ENCODE measurements at regions of chr3 and their contacts with region 1.

Region 1: GRCh38 chr3:48429317-48429959 is 448 bp downstream of the PLXNB1 start:
- DNase-seq: peak; percentile 91
- H3K4me3 Mint-ChIP-seq: peak overlapping the region; percentile 80
- H3K27ac Mint-ChIP-seq: peak overlapping the region; percentile 89
- H3K4me1 Mint-ChIP-seq: peaks cover 62% of the 10 kb centered on the region
- H3K27me3 Mint-ChIP-seq: no peaks in the 10 kb centered on the region
- CTCF ChIP-seq: no peak

Region 2: DNA sequence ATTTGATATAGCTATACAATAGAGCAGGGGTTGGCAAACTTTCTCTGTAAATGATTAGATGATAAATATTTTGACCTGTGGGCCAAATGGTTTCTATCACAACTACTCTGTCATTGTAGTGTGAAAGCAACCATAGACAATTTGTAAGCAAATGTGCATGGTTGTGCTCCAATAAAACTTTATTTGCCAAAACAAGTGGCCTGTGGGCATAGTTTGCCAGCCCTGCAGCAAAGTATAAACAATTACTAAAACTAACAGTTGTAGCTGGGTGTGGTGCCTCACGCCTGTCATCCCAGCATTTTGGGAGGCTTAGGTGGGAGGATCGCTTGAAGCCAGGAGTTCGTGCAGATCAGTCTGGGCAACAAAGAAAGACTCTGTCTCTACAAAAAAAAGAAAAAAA is 1388.3 kb before region 1 on chr3:
- CTCF ChIA-PET with region 1: interaction called, 24 read pairs
- intact Hi-C with region 1: no loop called
- DNase-seq: no peak
- H3K4me3 Mint-ChIP-seq: no peak overlapping the region
- H3K27ac Mint-ChIP-seq: no peak overlapping the region
- H3K4me1 Mint-ChIP-seq: no peaks in the 10 kb centered on the region
- H3K27me3 Mint-ChIP-seq: no peaks in the 10 kb centered on the region
- CTCF ChIP-seq: no peak

Region 3: GRCh38 chr3:48708481-48708889 is 279.0 kb after region 1 on chr3:
- CTCF ChIA-PET with region 1: no interaction called
- intact Hi-C with region 1: no loop called
- DNase-seq: no peak
- H3K4me3 Mint-ChIP-seq: no peak overlapping the region
- H3K27ac Mint-ChIP-seq: no peak overlapping the region
- H3K4me1 Mint-ChIP-seq: no peaks in the 10 kb centered on the region
- H3K27me3 Mint-ChIP-seq: no peaks in the 10 kb centered on the region
- CTCF ChIP-seq: no peak

Region 4: DNA sequence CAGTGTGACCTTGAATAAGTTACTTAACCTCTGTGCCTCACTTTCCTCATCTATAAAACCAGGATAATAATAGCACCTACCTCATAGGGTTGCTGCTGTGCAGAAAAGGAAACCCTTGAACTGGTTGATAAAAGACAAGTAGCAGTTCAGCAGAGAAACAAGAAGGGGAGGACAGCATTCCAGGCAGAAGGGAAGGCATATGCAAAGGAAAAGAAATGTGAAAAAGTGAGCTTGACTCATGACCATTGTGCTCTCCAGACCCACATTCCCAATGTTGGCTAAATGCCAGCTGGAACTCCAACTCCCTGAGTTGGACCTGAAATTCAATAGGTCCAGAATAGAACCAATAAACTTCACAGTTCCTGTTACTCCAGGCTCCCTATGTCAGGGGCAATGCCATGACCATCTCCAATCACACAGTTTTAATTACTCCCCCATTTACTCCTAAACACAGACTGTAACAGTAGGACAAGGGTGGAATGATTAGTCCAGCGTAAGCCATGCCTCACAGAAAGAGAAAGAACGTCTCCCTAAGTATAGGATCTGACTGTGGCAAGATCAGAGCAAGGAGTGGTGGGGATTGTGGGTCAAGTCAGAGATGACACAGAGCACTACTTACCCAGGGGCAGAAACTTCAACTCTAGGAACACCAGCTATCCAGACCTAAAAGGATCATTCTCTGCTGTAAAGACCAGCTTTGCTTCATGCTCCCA is 391.3 kb after region 1 on chr3:
- CTCF ChIA-PET with region 1: no interaction called
- intact Hi-C with region 1: no loop called
- DNase-seq: no peak
- H3K4me3 Mint-ChIP-seq: no peak overlapping the region
- H3K27ac Mint-ChIP-seq: no peak overlapping the region
- H3K4me1 Mint-ChIP-seq: peaks cover 21% of the 10 kb centered on the region
- H3K27me3 Mint-ChIP-seq: no peaks in the 10 kb centered on the region
- CTCF ChIP-seq: no peak

Measured in Calu3 (cell line).